ENCODE measurements at regions of chr16 and their contacts with region 1.

Region 1: GRCh38 chr16:50065624-50066481 is at the start of gene HEATR3:
- DNase-seq: peak; percentile 94 to 98
- ATAC-seq: peak; percentile 96
- H3K4me3 ChIP-seq: peak within 1 kb of the TSS; percentile 41 to 64
- H3K27ac ChIP-seq: peak within 1 kb of the TSS in 1 of 2 donors; percentile 92
- H3K4me1 ChIP-seq: peaks cover 0 to 3% of the 10 kb centered on the region in 2 donors
- H3K27me3 ChIP-seq: no peaks in the 10 kb centered on the region
- total RNA-seq, gene HEATR3: 9.4 to 17.9 TPM

Region 2: DNA sequence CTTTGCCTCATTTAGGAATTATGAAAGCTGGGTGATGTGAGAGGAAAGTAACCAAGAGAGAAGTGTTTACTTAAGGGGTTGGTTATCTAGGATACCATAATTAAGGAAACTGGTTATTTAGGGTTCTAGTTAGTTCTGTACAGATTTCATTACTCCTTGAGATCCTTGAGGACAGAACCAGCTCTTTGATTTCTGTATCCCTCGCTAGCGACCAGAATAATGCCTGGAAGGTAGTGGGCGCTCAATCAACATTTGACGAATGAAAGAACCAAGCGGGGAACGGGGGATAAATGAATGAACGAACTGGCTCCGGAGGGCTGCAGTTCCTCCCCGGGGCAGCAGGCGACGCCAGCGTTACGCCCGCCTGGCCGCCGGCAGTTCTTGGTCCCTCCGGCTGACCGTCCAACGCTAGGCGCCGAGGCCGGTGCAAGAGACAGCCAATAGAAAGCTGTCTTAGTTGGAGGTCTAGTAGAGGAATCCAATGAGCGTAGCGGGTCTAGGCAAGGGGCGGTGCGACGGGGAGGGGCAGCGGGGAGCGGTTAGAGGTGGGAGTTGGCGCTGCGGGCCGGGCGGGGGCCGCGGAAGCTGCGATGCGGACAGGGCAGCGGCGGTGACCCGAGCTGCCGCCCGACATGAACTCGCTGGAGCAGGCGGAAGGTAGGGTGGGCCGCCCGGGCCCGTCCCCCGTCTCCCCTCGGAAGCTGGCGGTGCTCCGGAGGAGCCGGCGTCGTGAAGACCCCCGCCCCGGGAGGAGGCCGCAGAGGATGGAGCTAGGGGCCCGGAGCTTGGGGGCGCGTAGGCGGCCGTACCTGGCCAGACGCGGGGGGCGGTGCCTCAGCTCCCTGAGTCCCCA is 40.9 kb before region 1 on chr16 and contains the start of gene CNEP1R1:
- intact Hi-C with region 1: loop called in 1 of 2 experiments (anchors 2 kb)
- DNase-seq: peak; percentile 96 to 97
- ATAC-seq: peak; percentile 100
- H3K4me3 ChIP-seq: peak within 1 kb of the TSS; percentile 71 to 92
- H3K27ac ChIP-seq: peak within 1 kb of the TSS in 1 of 2 donors; percentile 20
- H3K4me1 ChIP-seq: no peaks in the 10 kb centered on the region
- H3K27me3 ChIP-seq: no peaks in the 10 kb centered on the region
- total RNA-seq, gene CNEP1R1: 25.0 to 25.3 TPM

Region 3: GRCh38 chr16:50152807-50153452 is 87.1 kb after region 1 on chr16 and contains the start of gene TENT4B:
- intact Hi-C with region 1: loop called (anchors 5 to 10 kb)
- DNase-seq: peak; percentile 93 to 96
- ATAC-seq: peak; percentile 95
- H3K4me3 ChIP-seq: peak within 1 kb of the TSS; percentile 78 to 99
- H3K27ac ChIP-seq: peak within 1 kb of the TSS in 1 of 2 donors; percentile 91
- H3K4me1 ChIP-seq: no peaks in the 10 kb centered on the region
- H3K27me3 ChIP-seq: no peaks in the 10 kb centered on the region
- total RNA-seq, gene TENT4B: 13.2 to 13.9 TPM

Region 4: DNA sequence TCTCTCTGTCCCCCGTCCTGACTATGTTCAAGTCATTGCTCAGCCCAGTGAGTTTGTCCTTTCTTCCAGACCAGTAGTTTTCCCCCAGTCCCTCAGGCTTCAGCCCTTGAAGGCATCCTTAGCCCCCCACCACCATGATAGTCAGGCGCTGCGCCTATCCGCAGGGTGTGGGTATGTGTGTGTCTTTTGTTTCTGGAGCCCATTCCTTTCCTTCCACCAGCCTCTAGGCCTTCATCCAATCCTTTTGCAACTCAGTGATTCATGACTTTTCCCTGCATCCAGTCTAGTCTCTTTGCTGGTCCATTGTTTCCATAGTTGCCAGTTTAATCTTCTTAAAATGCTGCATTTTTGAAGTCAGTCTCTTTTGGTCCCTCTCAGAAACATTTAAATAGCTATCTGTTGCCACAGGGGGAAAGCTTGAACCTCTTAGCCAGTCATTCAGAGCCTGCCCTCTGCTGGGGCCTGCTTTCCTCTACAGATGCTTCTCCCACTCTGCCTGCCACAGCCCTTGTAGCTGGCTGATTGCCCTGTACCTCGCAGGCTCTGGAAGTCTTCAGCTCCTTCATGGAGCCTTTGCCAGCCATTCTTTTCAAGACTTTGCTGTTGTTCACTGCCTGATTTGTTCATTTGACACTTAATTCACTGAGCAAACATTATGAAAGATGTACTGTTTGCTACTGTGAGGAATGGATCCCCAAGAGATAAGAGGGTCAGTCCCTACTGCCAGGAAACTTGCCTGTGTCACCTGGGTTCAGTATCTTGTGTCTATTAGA is 144.6 kb after region 1 on chr16:
- intact Hi-C with region 1: loop called in 1 of 2 experiments (anchors 5 kb)
- DNase-seq: peak; percentile 87 to 89
- ATAC-seq: peak; percentile 89
- H3K4me3 ChIP-seq: no peak overlapping the region
- H3K27ac ChIP-seq: peak overlapping the region in 1 of 2 donors; percentile 32
- H3K4me1 ChIP-seq: peaks cover 0 to 3% of the 10 kb centered on the region in 2 donors
- H3K27me3 ChIP-seq: no peaks in the 10 kb centered on the region

Measured in aorta (tissue), 5 donors.